Aorta (tissue), 5 donors: ENCODE measurements at regions of chr1 and their contacts with region 1.

Region 1: GRCh38 chr1:171801487-171801891 is 20.0 kb downstream of the METTL13 start:
- DNase-seq: no peak
- ATAC-seq: no peak
- H3K4me3 ChIP-seq: no peak overlapping the region
- H3K27ac ChIP-seq: no peak overlapping the region
- H3K4me1 ChIP-seq: no peaks in the 10 kb centered on the region
- H3K27me3 ChIP-seq: no peaks in the 10 kb centered on the region

Region 2: DNA sequence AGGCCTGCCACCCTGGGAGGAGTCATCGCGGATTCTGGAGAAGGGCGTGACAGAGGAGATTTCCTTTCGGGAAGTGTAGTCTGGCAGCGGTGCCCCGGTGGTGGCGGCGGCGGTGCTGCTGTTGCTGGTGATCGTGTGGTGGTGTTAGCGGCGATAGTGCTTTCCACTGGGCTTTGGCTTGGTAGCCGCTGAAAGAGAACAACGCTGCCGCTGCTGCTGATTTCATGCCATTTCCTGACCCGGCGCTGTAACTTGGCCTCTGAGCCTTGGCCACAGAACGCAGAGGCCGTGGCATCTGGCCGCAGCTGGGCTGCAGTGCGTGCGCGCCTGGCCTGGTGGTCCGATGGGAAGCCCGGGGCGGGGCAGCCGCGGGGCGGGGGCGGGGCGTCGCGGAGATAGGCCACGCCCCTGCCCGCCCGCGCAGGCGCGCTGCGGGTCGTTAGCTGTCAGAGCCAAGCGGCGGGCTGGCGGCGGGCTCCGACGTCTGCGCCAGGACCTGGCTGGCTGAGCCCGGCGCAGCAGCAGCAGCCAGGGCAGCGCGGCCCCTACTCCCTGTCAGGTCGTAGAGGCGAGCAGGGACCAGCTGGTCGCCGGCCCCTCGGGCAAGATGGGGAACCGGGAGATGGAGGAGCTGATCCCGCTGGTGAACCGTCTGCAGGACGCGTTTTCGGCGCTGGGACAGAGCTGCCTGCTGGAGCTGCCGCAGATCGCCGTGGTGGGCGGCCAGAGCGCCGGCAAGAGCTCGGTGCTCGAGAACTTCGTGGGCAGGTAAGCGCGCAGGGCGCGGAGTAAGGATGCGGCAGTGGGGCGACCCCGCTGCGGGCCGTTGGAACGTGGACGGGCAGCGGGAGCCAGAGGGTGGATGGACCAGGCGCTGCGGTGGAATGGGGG is 39.8 kb after region 1 on chr1 and contains the start of gene DNM3:
- intact Hi-C with region 1: loop called in 1 of 2 experiments (anchors 2 kb)
- DNase-seq: peak; percentile 87 to 93
- ATAC-seq: peak; percentile 98
- H3K4me3 ChIP-seq: peak within 1 kb of the TSS; percentile 35 to 56
- H3K27ac ChIP-seq: peak within 1 kb of the TSS in 1 of 2 donors; percentile 76
- H3K4me1 ChIP-seq: no peaks in the 10 kb centered on the region
- H3K27me3 ChIP-seq: no peaks in the 10 kb centered on the region
- total RNA-seq, gene DNM3: 5.1 to 16.2 TPM

Region 3: DNA sequence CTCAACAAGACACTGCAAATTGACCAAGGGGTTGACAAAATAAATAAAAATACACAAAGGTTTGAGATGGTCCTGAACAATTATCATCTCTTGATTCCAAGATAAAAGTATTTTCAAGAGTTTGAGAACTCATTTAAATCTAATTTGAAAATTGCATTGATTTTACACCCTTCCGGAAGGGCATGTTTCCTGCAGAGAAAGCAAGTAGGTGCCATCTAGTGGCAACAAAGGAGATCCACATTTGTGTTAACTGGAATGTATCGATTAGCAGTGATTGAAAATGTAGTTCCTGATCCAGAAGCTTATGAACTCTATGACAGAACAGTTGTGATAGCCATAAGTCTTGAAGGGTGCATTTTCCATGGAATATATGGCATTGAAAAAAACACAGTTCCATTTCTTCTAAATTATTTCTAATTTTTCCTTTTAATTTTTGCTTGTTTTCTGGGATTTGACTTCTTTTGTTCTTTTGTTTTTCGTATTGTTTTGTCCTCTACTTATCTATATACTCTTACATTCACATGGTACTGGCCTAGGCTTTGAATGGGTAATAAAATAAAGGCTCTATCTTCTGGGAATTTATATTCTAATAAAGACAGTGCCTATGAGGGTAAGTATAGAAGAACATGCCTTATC is 183.5 kb after region 1 on chr1:
- intact Hi-C with region 1: loop called (anchors 2 to 5 kb)
- DNase-seq: no peak
- ATAC-seq: no peak
- H3K4me3 ChIP-seq: no peak overlapping the region
- H3K27ac ChIP-seq: no peak overlapping the region
- H3K4me1 ChIP-seq: no peaks in the 10 kb centered on the region
- H3K27me3 ChIP-seq: no peaks in the 10 kb centered on the region

Region 4: GRCh38 chr1:172002725-172003345 is 201.3 kb after region 1 on chr1:
- intact Hi-C with region 1: no loop called
- DNase-seq: no peak
- ATAC-seq: no peak
- H3K4me3 ChIP-seq: no peak overlapping the region
- H3K27ac ChIP-seq: no peak overlapping the region
- H3K4me1 ChIP-seq: no peaks in the 10 kb centered on the region
- H3K27me3 ChIP-seq: no peaks in the 10 kb centered on the region

Region 5: GRCh38 chr1:172443626-172444453 is 642.4 kb after region 1 on chr1 and contains the start of gene PIGC:
- intact Hi-C with region 1: loop called in 1 of 2 experiments (anchors 10 kb)
- DNase-seq: peak; percentile 95 to 97
- ATAC-seq: peak; percentile 98
- H3K4me3 ChIP-seq: peak within 1 kb of the TSS; percentile 60 to 92
- H3K27ac ChIP-seq: no peak within 1 kb of the TSS
- H3K4me1 ChIP-seq: no peaks in the 10 kb centered on the region
- H3K27me3 ChIP-seq: no peaks in the 10 kb centered on the region
- total RNA-seq, gene PIGC: 18.0 to 22.9 TPM